BJ (cell line): ENCODE measurements at regions of chr12 and their contacts with region 1.

Region 1: DNA sequence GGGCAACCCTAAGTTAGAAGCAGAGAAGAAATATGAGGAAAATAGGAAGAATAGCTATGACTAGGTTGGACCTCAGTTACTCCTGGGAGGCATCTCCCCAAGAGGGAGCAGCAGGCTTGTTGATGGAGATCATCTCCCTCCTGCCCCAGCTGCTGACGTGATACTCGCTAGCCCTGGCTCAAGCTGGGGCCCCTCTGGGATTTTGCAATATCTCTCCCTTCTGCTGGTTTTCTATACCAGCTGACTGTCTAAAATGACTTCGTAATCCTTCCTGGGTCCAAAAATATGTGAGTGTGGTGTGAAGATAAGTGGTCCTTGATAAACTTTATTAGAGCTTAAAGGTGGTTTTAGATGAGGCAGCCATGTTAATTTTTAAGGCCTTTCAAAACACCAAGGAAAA is 4.5 kb upstream of the HECTD4 start:
- DNase-seq: no peak
- H3K4me3 ChIP-seq: no peak overlapping the region
- H3K27me3 ChIP-seq: no peaks in the 10 kb centered on the region
- CTCF ChIP-seq: no peak

Region 2: GRCh38 chr12:112236386-112236785 is 150.3 kb before region 1 on chr12:
- CTCF ChIA-PET with region 1: interaction called, 13 read pairs
- POLR2A ChIA-PET with region 1: no interaction called
- DNase-seq: peak; percentile 4
- H3K4me3 ChIP-seq: no peak overlapping the region
- H3K27me3 ChIP-seq: no peaks in the 10 kb centered on the region
- CTCF ChIP-seq: no peak

Region 3: GRCh38 chr12:112368856-112369255 is 17.9 kb before region 1 on chr12:
- CTCF ChIA-PET with region 1: no interaction called
- POLR2A ChIA-PET with region 1: no interaction called
- DNase-seq: no peak
- H3K4me3 ChIP-seq: no peak overlapping the region
- H3K27me3 ChIP-seq: no peaks in the 10 kb centered on the region
- CTCF ChIP-seq: no peak